Activated T-helper 1 cell treated with anti-CD3 and anti-CD28 coated beads, Interleukin-12 subunit alpha, Interleukin-12 subunit beta, Interleukin-2, Interleukin-4 antibody, amounts not matched to agents 30 ng/mL and 10 ng/mL and 1 ng/mL, durations not matched to agents 14 hours and 24 hours and 36 hours (primary cell): ENCODE measurements at regions of chr11 and their contacts with region 1.

Region 1: GRCh38 chr11:121581607-121582006 is 128.8 kb upstream of the SORL1-AS1 start:
- DNase-seq: no peak
- H3K4me3 Mint-ChIP-seq: no peak overlapping the region
- H3K27ac Mint-ChIP-seq: peak overlapping the region; percentile 18
- H3K4me1 Mint-ChIP-seq: peaks cover 29% of the 10 kb centered on the region
- H3K27me3 Mint-ChIP-seq: no peaks in the 10 kb centered on the region

Region 2: DNA sequence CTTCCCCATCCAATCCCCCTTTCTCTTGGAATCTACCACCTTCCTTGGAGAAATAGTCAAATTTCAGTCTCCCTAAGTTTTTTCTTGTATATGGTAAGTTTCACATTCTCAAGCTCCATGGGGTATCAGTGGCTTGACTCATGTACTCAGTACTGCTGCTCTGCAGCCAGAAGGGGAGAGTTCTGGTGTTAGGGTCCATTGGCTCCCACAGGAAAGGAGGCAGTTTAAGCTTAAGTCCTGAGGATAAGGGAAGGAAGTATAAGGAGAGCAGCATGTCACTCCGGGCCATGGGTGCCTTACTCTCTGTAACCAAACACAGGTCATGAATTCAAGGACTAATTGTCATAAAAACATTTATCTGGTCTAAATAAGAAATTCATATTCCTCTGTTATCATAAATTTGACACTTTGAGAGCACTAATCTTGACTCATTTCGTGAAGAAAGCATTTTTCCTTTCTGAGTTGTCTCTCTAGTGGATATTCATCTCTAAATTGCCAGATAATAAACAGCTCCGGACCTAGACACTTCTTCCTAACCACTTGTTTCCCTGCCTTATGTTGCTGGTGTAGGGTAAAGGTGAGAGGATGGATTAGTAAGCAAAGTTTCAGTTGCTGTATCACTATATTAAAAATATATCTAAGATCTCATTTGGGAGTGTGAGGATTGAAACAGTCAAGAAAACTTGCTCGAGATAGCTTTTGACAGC is 149.6 kb before region 1 on chr11:
- intact Hi-C with region 1: loop called (anchors 1 kb)
- DNase-seq: no peak
- H3K4me3 Mint-ChIP-seq: no peak overlapping the region
- H3K27ac Mint-ChIP-seq: peak overlapping the region; percentile 36
- H3K4me1 Mint-ChIP-seq: peaks cover 27% of the 10 kb centered on the region
- H3K27me3 Mint-ChIP-seq: peaks cover 3% of the 10 kb centered on the region

Region 3: GRCh38 chr11:121520243-121521144 is 61.1 kb before region 1 on chr11:
- intact Hi-C with region 1: no loop called
- DNase-seq: no peak
- H3K4me3 Mint-ChIP-seq: no peak overlapping the region
- H3K27ac Mint-ChIP-seq: no peak overlapping the region
- H3K4me1 Mint-ChIP-seq: peaks cover 22% of the 10 kb centered on the region
- H3K27me3 Mint-ChIP-seq: no peaks in the 10 kb centered on the region

Region 4: GRCh38 chr11:122062763-122063162 is 481.2 kb after region 1 on chr11:
- intact Hi-C with region 1: no loop called
- DNase-seq: no peak
- H3K4me3 Mint-ChIP-seq: no peak overlapping the region
- H3K27ac Mint-ChIP-seq: no peak overlapping the region
- H3K4me1 Mint-ChIP-seq: no peaks in the 10 kb centered on the region
- H3K27me3 Mint-ChIP-seq: no peaks in the 10 kb centered on the region